IMR-90 (cell line): ENCODE measurements at regions of chr16 and their contacts with region 1.

Region 1: GRCh38 chr16:86751076-86752030 is 173.0 kb downstream of the FOXL1 start:
- DNase-seq: peak; percentile 87
- ATAC-seq: peak; percentile 93
- H3K4me3 ChIP-seq: no peak overlapping the region
- H3K27ac ChIP-seq: peak overlapping the region; percentile 44
- H3K4me1 ChIP-seq: peaks cover 12% of the 10 kb centered on the region
- H3K27me3 ChIP-seq: no peaks in the 10 kb centered on the region
- CTCF ChIP-seq: no peak
- POLR2A ChIP-seq: no peak
- RAD21 ChIP-seq: no peak

Region 2: DNA sequence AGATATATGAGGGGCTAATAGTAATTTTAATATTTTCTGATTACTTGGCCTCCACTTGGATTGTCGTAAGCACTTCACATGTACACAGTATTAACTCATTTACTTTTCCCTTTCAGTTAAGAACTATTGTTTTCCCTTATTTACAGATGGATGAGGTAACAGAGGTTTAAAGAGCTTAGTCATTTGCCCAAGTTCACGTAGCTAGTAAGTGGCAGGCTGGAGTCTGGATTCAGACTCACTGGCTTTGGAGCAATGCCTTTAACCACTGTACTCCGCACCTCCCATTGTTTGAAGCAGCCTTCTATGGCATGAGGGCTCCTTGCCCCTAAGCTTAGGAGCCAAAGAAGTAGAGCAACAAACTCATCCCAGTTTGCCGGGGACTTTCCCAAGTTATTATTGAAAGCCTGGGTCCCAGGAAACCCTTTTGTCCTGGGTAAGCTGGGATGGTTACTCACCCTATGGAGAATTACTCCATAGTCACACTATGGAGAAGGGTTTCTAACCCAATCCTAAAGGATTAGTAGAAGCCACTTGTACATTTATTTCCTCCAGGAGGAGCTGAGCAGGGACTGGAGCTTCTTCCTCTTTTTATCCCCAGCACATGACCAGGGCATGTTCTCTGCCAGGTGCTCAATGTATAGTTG is 160.7 kb before region 1 on chr16:
- CTCF ChIA-PET with region 1: no interaction called
- POLR2A ChIA-PET with region 1: no interaction called
- dilution Hi-C with region 1: no loop called
- in situ Hi-C with region 1: loop called (anchors 10 kb)
- intact Hi-C with region 1: no loop called
- DNase-seq: peak; percentile 96
- ATAC-seq: peak; percentile 73
- H3K4me3 ChIP-seq: no peak overlapping the region
- H3K27ac ChIP-seq: peak overlapping the region; percentile 11
- H3K4me1 ChIP-seq: peaks cover 33% of the 10 kb centered on the region
- H3K27me3 ChIP-seq: no peaks in the 10 kb centered on the region
- CTCF ChIP-seq: no peak
- POLR2A ChIP-seq: no peak
- RAD21 ChIP-seq: no peak

Region 3: DNA sequence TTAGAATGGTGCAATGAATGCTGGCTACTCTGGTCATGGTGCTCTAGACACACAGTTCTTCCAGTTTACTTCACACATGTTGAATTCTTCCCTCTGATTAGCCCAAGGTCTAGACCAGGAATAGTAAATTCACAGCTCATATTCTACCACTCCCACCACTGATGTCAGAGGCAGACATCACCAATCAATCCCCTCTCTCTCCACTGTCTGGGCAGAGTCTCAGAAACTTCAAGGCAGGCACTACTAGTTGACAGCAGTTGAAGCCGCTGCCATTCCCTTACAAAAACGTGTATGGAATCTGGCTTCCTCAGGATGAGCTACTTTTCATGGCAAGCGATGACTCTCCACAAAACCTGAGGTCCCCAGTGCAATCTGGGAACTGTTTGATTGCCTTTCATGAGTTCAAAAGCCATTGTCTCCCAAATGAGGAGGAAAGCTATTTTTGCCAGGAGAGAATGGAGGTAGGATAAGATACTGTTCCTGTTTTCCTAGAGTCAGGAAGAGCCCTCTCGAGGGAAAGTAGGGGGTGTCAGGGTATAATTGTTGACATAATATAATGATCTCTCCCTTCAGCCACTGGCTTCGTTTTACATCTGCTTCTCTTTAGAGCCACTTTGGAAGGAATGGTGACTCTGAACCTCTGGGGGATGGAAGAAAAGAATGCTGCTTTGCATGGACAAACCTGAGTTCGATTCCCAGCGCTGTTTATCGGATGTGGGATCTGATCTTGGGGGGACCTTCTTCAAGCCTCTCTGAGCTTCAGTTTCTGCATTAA is 83.0 kb before region 1 on chr16:
- CTCF ChIA-PET with region 1: no interaction called
- POLR2A ChIA-PET with region 1: no interaction called
- dilution Hi-C with region 1: no loop called
- in situ Hi-C with region 1: no loop called
- intact Hi-C with region 1: no loop called
- DNase-seq: peak; percentile 77
- ATAC-seq: no peak
- H3K4me3 ChIP-seq: no peak overlapping the region
- H3K27ac ChIP-seq: no peak overlapping the region
- H3K4me1 ChIP-seq: peaks cover 43% of the 10 kb centered on the region
- H3K27me3 ChIP-seq: no peaks in the 10 kb centered on the region
- CTCF ChIP-seq: no peak
- POLR2A ChIP-seq: no peak
- RAD21 ChIP-seq: no peak